OCI-LY7 (cell line): ENCODE measurements at regions of chr9 and their contacts with region 1.

Region 1: DNA sequence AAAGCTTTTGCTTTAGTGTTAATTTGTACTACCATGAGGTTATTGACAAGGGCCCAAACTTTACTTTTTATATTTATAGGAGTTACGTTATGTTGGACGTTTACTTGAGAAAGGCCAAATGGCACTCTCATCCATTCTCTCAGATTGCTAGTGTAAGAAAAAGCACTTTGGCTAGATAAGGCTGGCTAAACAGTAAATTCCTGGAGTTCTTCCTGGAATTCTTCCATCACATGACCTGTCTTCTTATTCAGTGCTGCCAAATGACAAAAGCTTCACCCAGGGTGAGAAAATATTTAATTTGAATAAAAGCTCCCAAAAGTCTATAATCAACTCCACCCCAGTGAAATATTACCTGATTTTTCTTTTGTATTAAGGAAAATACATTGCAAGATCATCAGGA is 1568.9 kb upstream of the ACO1 start:
- DNase-seq: no peak
- H3K4me3 ChIP-seq: no peak overlapping the region
- H3K27ac ChIP-seq: no peak overlapping the region
- H3K4me1 ChIP-seq: no peaks in the 10 kb centered on the region
- CTCF ChIP-seq: no peak

Region 2: DNA sequence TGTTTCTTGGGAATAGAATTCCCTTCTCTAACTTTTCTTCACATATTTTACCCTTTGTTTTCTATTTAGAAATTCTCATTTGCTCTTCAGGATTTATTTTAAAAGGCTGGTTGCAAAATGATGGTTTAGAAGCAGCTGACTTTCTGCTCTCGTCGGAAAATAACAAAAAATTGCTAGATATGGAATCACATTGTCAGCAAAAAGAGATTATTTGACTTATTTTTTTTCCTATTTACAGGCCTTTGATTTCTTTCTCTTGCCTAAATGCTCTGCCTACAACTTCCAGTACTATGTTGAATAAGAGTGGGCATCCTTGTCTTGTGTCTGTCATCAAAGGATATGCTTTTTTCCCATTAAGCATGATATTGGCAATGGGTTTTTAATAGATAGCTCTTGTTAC is 50.3 kb before region 1 on chr9:
- CTCF ChIA-PET with region 1: no interaction called
- POLR2A ChIA-PET with region 1: no interaction called
- intact Hi-C with region 1: loop called (anchors 10 kb)
- DNase-seq: no peak
- H3K4me3 ChIP-seq: no peak overlapping the region
- H3K27ac ChIP-seq: no peak overlapping the region
- H3K4me1 ChIP-seq: no peaks in the 10 kb centered on the region
- CTCF ChIP-seq: no peak

Region 3: GRCh38 chr9:31137176-31138160 is 321.9 kb after region 1 on chr9:
- CTCF ChIA-PET with region 1: no interaction called
- POLR2A ChIA-PET with region 1: no interaction called
- intact Hi-C with region 1: no loop called
- DNase-seq: no peak
- H3K4me3 ChIP-seq: no peak overlapping the region
- H3K27ac ChIP-seq: no peak overlapping the region
- H3K4me1 ChIP-seq: no peaks in the 10 kb centered on the region
- CTCF ChIP-seq: no peak